CD8-positive, alpha-beta T cell (primary cell): ENCODE measurements at regions of chr11 and their contacts with region 1.

Region 1: DNA sequence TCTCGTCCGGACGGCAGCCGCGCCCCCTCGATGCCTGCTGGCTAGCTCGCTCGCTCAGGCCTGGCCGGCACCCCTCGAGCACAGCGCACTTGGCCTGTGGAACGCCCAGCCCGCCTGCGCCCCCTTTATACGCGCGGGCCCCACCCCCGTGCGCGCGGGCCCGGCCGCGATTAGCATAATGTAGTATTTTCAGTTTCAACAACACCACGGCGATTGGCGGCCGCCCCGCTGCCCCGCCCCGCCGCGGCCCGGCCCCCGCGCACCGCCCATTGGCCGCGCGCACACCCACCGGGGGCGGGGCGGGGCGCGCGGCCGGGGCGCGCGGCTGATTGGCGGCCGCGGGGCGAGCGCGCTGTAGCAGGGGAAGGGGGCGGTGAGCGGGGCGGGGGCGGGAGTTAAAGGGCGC is at the start of gene CDKN1C:
- DNase-seq: peak; percentile 65 to 91 (median 84)
- ATAC-seq: peak; percentile 91
- H3K4me3 ChIP-seq: peak within 1 kb of the TSS; percentile 74 to 89
- H3K4me3 Mint-ChIP-seq: peak within 1 kb of the TSS; percentile 93
- H3K27ac ChIP-seq: peak within 1 kb of the TSS in 1 of 2 experiments; percentile 31
- H3K27ac Mint-ChIP-seq: peak within 1 kb of the TSS; percentile 60
- H3K4me1 ChIP-seq: peaks cover 16% of the 10 kb centered on the region
- H3K4me1 Mint-ChIP-seq: peaks cover 19% of the 10 kb centered on the region
- H3K27me3 ChIP-seq: no peaks in the 10 kb centered on the region
- H3K27me3 Mint-ChIP-seq: no peaks in the 10 kb centered on the region
- CTCF ChIP-seq: no peak
- total RNA-seq, gene CDKN1C: 2.5 to 3.6 TPM

Region 2: GRCh38 chr11:2298795-2299761 is 586.6 kb before region 1 on chr11:
- CTCF ChIA-PET with region 1: interaction called, 11 read pairs
- POLR2A ChIA-PET with region 1: no interaction called
- intact Hi-C with region 1: loop called in 1 of 2 experiments (anchors 2 kb)
- DNase-seq: peak in 6 of 9 experiments; percentile 45 to 75 (median 66)
- ATAC-seq: peak; percentile 51
- H3K4me3 ChIP-seq: peak overlapping the region; percentile 43 to 85
- H3K4me3 Mint-ChIP-seq: peak overlapping the region; percentile 90
- H3K27ac ChIP-seq: peak overlapping the region; percentile 80 to 81
- H3K27ac Mint-ChIP-seq: peak overlapping the region; percentile 92
- H3K4me1 ChIP-seq: peaks cover 47% of the 10 kb centered on the region
- H3K4me1 Mint-ChIP-seq: peaks cover 64% of the 10 kb centered on the region
- H3K27me3 ChIP-seq: no peaks in the 10 kb centered on the region
- H3K27me3 Mint-ChIP-seq: no peaks in the 10 kb centered on the region
- CTCF ChIP-seq: no peak

Region 3: DNA sequence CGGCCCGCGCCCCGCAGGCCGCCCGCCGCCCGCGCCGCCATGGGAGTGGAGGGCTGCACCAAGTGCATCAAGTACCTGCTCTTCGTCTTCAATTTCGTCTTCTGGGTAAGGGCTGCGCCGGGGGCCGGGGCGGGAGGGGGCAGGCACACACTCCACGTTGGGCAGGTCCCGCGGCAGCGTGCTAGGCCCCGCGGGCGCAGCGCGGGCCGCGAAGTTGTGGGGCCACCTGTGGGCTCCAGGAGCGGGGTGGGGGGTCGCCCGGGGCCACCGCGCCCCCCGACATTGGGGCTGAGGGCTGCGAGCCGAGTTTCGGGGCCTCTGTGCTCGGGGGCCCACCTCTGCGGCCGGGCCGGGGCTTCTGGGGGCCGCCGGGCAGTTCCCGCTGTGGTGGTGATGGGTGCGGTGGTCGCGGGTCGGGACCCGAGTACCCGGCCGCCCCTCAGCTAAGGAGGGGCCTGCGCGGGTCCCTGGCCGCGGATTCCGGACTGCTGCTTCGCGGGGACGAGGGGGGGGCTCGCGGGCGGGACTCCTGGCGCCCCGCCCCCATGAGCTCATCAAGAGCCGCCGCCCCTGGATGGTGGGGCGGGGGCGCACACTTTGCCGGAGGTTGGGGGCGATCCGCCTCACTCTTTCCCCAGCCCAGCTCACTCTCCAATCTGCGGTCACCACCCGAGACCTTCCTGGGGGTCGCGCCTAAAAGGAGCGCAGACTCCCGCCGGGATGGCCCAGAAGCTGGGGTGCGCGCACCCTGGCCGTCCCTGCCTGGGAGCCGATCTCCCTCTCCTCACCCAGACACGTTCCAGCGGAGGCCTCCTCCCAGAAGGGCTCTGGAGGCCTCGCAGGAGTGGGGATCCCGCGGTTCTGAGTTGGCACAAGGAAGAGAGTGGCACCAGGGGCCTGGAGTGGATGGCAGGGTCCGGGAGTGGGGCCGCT is 507.9 kb before region 1 on chr11:
- CTCF ChIA-PET with region 1: no interaction called
- POLR2A ChIA-PET with region 1: interaction called, 3 read pairs
- intact Hi-C with region 1: loop called in 1 of 2 experiments (anchors 2 kb)
- DNase-seq: peak in 8 of 9 experiments; percentile 31 to 77 (median 62)
- ATAC-seq: peak; percentile 59
- H3K4me3 ChIP-seq: peak overlapping the region; percentile 66 to 91
- H3K4me3 Mint-ChIP-seq: peak overlapping the region; percentile 83
- H3K27ac ChIP-seq: peak overlapping the region; percentile 63 to 68
- H3K27ac Mint-ChIP-seq: peak overlapping the region; percentile 79
- H3K4me1 ChIP-seq: peaks cover 36% of the 10 kb centered on the region
- H3K4me1 Mint-ChIP-seq: peaks cover 38% of the 10 kb centered on the region
- H3K27me3 ChIP-seq: no peaks in the 10 kb centered on the region
- H3K27me3 Mint-ChIP-seq: no peaks in the 10 kb centered on the region
- CTCF ChIP-seq: no peak

Region 4: GRCh38 chr11:2428322-2428795 is 457.3 kb before region 1 on chr11:
- CTCF ChIA-PET with region 1: interaction called, 11 read pairs
- POLR2A ChIA-PET with region 1: no interaction called
- intact Hi-C with region 1: loop called (anchors 1 to 5 kb)
- DNase-seq: peak; percentile 75 to 94 (median 87)
- ATAC-seq: peak; percentile 91
- H3K4me3 ChIP-seq: no peak overlapping the region
- H3K4me3 Mint-ChIP-seq: no peak overlapping the region
- H3K27ac ChIP-seq: no peak overlapping the region
- H3K27ac Mint-ChIP-seq: no peak overlapping the region
- H3K4me1 ChIP-seq: no peaks in the 10 kb centered on the region
- H3K4me1 Mint-ChIP-seq: no peaks in the 10 kb centered on the region
- H3K27me3 ChIP-seq: no peaks in the 10 kb centered on the region
- H3K27me3 Mint-ChIP-seq: no peaks in the 10 kb centered on the region
- CTCF ChIP-seq: peak; percentile 70

Region 5: GRCh38 chr11:2662430-2663299 is 223.0 kb before region 1 on chr11:
- CTCF ChIA-PET with region 1: no interaction called
- POLR2A ChIA-PET with region 1: no interaction called
- intact Hi-C with region 1: no loop called
- DNase-seq: no peak
- ATAC-seq: no peak
- H3K4me3 ChIP-seq: no peak overlapping the region
- H3K4me3 Mint-ChIP-seq: no peak overlapping the region
- H3K27ac ChIP-seq: no peak overlapping the region
- H3K27ac Mint-ChIP-seq: no peak overlapping the region
- H3K4me1 ChIP-seq: no peaks in the 10 kb centered on the region
- H3K4me1 Mint-ChIP-seq: no peaks in the 10 kb centered on the region
- H3K27me3 ChIP-seq: no peaks in the 10 kb centered on the region
- H3K27me3 Mint-ChIP-seq: no peaks in the 10 kb centered on the region
- CTCF ChIP-seq: no peak

Region 6: DNA sequence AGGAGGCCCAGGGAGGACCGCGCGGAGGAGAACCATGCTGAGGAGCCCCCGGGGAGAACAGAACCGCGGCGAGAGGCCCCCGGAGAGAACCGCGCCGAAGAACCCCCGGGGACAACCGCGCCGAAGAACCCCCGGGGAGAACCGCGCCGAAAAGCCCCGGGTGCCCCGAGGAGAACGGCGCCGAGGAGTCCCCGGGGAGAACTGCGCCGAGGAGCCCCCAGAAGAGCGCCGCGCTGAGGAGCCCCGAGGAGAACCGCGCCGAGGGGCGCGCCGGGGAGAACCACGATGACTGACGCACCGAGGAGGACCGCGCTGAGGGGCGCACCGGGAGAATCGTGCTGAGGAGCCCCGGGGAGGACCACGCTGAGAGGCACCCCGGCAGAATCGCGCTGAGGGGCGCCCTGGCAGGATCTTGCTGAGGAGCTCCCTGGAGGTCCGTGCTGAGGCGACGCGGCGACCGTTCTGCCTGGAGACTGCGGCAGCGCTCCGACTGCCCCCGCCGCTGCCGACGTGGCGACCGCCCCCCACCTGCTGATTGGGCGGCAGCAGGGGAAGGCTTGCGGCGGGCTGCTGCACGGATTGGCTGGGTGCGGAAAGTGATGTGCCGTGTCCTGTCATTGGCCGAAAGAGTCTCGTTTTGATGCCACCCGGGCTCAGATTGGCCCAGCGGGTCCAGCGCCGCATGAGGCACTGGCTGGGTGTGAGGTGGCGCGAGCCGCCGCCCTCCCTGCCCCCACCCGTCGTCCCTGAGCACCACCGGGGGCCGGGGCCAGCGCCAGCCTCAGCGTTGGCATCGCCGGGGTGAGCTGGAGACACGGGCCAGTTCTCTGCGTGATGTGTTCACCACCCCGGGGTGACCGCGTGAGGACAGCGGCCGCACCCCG is 185.9 kb before region 1 on chr11 and contains the start of gene KCNQ1OT1:
- CTCF ChIA-PET with region 1: interaction called, 3 read pairs
- POLR2A ChIA-PET with region 1: no interaction called
- intact Hi-C with region 1: loop called (anchors 1 to 5 kb)
- DNase-seq: peak; percentile 74 to 94 (median 84)
- ATAC-seq: peak; percentile 93
- H3K4me3 ChIP-seq: peak within 1 kb of the TSS; percentile 61 to 67
- H3K4me3 Mint-ChIP-seq: peak within 1 kb of the TSS; percentile 80
- H3K27ac ChIP-seq: peak within 1 kb of the TSS; percentile 40 to 43
- H3K27ac Mint-ChIP-seq: peak within 1 kb of the TSS; percentile 62
- H3K4me1 ChIP-seq: peaks cover 5% of the 10 kb centered on the region
- H3K4me1 Mint-ChIP-seq: peaks cover 9% of the 10 kb centered on the region
- H3K27me3 ChIP-seq: no peaks in the 10 kb centered on the region
- H3K27me3 Mint-ChIP-seq: no peaks in the 10 kb centered on the region
- CTCF ChIP-seq: no peak
- total RNA-seq, gene KCNQ1OT1: 0.42 to 0.52 TPM

Region 7: DNA sequence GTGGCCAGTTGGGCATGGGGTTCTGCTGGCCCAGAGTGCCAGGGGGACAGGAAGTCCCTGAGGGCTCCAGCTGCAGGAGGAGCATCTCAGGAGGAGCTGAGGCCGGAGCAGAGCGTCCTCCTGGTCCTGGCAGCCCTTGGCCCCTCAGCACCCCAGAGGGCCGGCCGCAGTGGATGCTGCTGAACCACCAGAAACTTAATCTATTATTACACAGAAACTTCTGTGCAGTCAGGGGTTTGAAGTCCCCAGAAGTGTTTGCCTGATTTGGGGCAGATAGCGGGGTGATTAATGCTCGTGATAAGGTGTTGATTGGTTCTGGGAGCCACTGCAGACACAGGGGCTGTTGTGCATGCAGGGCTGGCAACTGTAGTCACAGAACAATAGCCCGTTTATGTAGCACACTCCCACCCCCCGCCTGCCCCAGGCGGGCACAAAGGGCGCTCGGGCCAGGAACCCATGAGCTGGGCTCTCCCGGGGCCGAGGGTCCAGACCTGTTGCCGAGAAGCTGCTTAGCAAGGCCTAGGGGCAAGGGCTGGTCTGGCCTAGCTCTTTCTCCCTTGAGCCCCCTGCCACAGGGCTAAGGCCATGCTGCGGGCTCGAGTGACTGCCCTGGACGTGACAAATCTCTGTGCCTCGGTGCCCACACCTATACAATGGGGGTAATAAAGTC is 156.9 kb before region 1 on chr11:
- CTCF ChIA-PET with region 1: no interaction called
- POLR2A ChIA-PET with region 1: no interaction called
- intact Hi-C with region 1: no loop called
- DNase-seq: no peak
- ATAC-seq: no peak
- H3K4me3 ChIP-seq: no peak overlapping the region
- H3K4me3 Mint-ChIP-seq: no peak overlapping the region
- H3K27ac ChIP-seq: no peak overlapping the region
- H3K27ac Mint-ChIP-seq: no peak overlapping the region
- H3K4me1 ChIP-seq: no peaks in the 10 kb centered on the region
- H3K4me1 Mint-ChIP-seq: no peaks in the 10 kb centered on the region
- H3K27me3 ChIP-seq: no peaks in the 10 kb centered on the region
- H3K27me3 Mint-ChIP-seq: no peaks in the 10 kb centered on the region
- CTCF ChIP-seq: no peak

Region 8: GRCh38 chr11:2807025-2807681 is 78.5 kb before region 1 on chr11:
- CTCF ChIA-PET with region 1: no interaction called
- POLR2A ChIA-PET with region 1: no interaction called
- intact Hi-C with region 1: no loop called
- DNase-seq: peak in 1 of 9 experiments; percentile 1
- ATAC-seq: no peak
- H3K4me3 ChIP-seq: no peak overlapping the region
- H3K4me3 Mint-ChIP-seq: no peak overlapping the region
- H3K27ac ChIP-seq: no peak overlapping the region
- H3K27ac Mint-ChIP-seq: no peak overlapping the region
- H3K4me1 ChIP-seq: peaks cover 20% of the 10 kb centered on the region
- H3K4me1 Mint-ChIP-seq: peaks cover 32% of the 10 kb centered on the region
- H3K27me3 ChIP-seq: peaks cover 0 to under 1% of the 10 kb centered on the region in 2 experiments
- H3K27me3 Mint-ChIP-seq: no peaks in the 10 kb centered on the region
- CTCF ChIP-seq: no peak

Region 9: GRCh38 chr11:3057069-3057963 is 171.6 kb after region 1 on chr11 and contains the start of gene CARS1:
- CTCF ChIA-PET with region 1: no interaction called
- POLR2A ChIA-PET with region 1: no interaction called
- intact Hi-C with region 1: loop called (anchors 1 to 2 kb)
- DNase-seq: peak; percentile 79 to 96 (median 92)
- ATAC-seq: peak; percentile 97
- H3K4me3 ChIP-seq: peak within 1 kb of the TSS; percentile 88 to 93
- H3K4me3 Mint-ChIP-seq: peak within 1 kb of the TSS; percentile 87
- H3K27ac ChIP-seq: peak within 1 kb of the TSS; percentile 73 to 76
- H3K27ac Mint-ChIP-seq: peak within 1 kb of the TSS; percentile 79
- H3K4me1 ChIP-seq: peaks cover 17% of the 10 kb centered on the region
- H3K4me1 Mint-ChIP-seq: peaks cover 38% of the 10 kb centered on the region
- H3K27me3 ChIP-seq: no peaks in the 10 kb centered on the region
- H3K27me3 Mint-ChIP-seq: no peaks in the 10 kb centered on the region
- CTCF ChIP-seq: no peak
- total RNA-seq, gene CARS1: 34.2 to 34.7 TPM

Region 10: DNA sequence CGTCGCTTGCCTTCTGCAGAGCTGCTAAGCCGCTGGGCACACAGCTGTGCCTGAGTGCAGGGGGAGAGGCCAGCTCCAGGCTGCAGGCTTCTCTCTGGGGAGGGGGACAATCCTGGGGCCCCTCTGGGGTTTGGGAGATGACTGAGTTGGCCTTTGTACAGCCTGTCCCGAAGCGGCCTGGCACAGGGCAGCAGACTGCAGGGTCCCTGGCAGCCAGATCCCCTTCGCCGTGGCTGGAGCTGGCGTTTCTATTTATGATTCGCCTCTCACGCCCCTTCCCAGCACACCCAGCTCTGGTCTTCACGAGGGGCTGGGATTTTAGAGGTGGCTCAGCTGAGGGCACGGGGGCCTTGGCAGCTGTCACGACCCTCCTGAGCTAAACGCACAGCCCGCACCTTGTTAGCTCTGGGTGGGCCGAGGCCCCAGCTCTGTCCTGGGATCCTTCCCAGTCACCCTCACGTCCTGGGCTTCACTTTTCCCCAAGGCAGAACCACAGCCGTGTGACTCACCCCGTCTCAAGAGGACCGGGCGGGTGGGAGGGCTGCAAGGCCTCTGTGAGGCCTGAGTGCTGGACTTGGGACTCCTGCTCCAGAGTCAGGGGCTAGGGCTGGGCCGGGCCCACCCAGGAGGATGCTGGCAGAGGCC is 261.1 kb after region 1 on chr11:
- CTCF ChIA-PET with region 1: no interaction called
- POLR2A ChIA-PET with region 1: no interaction called
- intact Hi-C with region 1: no loop called
- DNase-seq: no peak
- ATAC-seq: no peak
- H3K4me3 ChIP-seq: no peak overlapping the region
- H3K4me3 Mint-ChIP-seq: no peak overlapping the region
- H3K27ac ChIP-seq: no peak overlapping the region
- H3K27ac Mint-ChIP-seq: no peak overlapping the region
- H3K4me1 ChIP-seq: peaks cover 4% of the 10 kb centered on the region
- H3K4me1 Mint-ChIP-seq: peaks cover 3% of the 10 kb centered on the region
- H3K27me3 ChIP-seq: no peaks in the 10 kb centered on the region
- H3K27me3 Mint-ChIP-seq: no peaks in the 10 kb centered on the region
- CTCF ChIP-seq: no peak